Breast epithelium (tissue), 4 donors: ENCODE measurements at regions of chr18 and their contacts with region 1.

Region 1: DNA sequence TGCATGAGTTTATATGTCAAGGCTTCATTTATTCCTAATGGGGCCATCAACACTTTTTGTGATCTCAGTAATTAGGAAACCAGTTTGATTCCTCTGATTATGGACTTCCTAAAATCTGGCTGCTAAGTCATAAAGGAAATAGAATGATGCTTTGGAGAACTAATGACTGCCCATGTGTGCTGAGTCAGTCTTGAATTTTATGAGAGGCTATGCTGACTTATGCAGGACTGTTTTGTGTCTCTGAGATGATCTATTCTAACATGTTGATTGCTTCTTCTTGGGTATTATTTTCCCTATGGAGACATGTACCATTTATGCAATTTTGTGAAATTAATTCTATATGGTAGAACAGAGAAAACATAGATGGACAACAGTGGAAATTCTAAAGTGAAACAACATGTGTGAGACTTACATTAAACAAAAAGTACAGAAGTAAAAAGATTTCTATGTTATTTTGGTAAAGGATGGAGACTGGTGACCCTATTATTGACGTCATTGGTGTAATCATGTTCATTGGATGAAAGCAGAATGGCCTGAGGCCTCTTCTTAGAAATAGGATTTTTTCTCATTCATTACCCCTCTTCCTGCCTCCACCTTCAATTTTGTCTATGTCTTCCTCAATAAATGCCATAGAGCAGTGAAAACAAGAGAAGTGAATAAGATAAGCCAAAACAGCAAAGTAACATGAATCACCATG is 1658.2 kb upstream of the PIK3C3 start:
- DNase-seq: no peak
- H3K4me3 ChIP-seq: no peak overlapping the region
- H3K27ac ChIP-seq: no peak overlapping the region
- H3K4me1 ChIP-seq: no peaks in the 10 kb centered on the region
- H3K27me3 ChIP-seq: no peaks in the 10 kb centered on the region
- CTCF ChIP-seq: no peak
- POLR2A ChIP-seq: no peak

Region 2: GRCh38 chr18:39113790-39114189 is 1183.1 kb before region 1 on chr18:
- intact Hi-C with region 1: loop called (anchors 5 kb)
- DNase-seq: no peak
- H3K4me3 ChIP-seq: no peak overlapping the region
- H3K27ac ChIP-seq: no peak overlapping the region
- H3K4me1 ChIP-seq: no peaks in the 10 kb centered on the region
- H3K27me3 ChIP-seq: no peaks in the 10 kb centered on the region
- CTCF ChIP-seq: no peak
- POLR2A ChIP-seq: no peak

Region 3: GRCh38 chr18:41311571-41312547 is 1015.0 kb after region 1 on chr18:
- intact Hi-C with region 1: no loop called
- DNase-seq: no peak
- H3K4me3 ChIP-seq: no peak overlapping the region
- H3K27ac ChIP-seq: no peak overlapping the region
- H3K4me1 ChIP-seq: no peaks in the 10 kb centered on the region
- H3K27me3 ChIP-seq: no peaks in the 10 kb centered on the region
- CTCF ChIP-seq: no peak
- POLR2A ChIP-seq: no peak